ENCODE measurements at regions of chr12 and their contacts with region 1.

Region 1: GRCh38 chr12:1795785-1796514 is 24.4 kb upstream of the LRTM2 start:
- DNase-seq: peak; percentile 100
- H3K4me3 ChIP-seq: peak overlapping the region; percentile 63 to 94 (median 70)
- H3K27ac ChIP-seq: peak overlapping the region; percentile 89 to 99 (median 94)
- H3K4me1 ChIP-seq: peaks cover 10 to 61% (median 27%) of the 10 kb centered on the region in 6 donors
- H3K27me3 ChIP-seq: no peaks in the 10 kb centered on the region
- CTCF ChIP-seq: peak; percentile 86 to 100 (median 100)
- POLR2A ChIP-seq: peak; percentile 29 to 57 (median 47)

Region 2: DNA sequence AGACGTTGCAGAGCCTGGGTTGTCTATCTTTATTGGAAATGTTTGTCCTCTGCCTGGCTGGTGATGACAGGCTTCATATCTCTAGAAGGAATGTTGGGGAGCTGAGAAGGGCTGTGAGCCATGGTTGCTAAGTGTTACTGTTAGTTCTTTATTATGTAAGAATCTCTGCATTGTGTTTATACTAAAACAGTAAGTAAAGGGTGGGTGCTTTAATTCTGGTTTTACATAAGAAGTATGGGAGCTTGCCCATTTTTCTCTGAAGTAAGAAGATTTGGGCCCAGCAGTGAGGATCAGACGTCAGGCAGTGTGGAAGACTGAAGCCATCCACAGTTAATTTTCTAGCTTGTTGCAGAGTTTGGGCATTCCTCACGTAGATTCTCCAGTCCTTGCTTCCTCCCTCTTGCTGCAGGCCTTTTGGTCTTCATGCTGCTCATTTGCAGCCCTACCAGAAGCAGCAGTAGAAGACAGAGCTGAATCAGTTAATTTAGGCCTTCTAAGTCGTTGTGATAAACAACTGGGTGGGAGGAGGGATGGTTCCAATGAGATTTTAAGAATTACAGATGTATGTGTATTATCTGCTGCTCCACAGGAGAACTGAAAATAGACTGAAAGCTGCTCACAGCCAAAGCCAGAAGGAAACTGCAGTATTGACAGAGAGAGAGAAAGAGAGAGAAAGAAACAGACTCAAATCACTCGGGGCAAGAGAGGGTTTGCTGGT is 145.5 kb before region 1 on chr12:
- intact Hi-C with region 1: loop called (anchors 2 kb)
- DNase-seq: no peak
- H3K4me3 ChIP-seq: no peak overlapping the region
- H3K27ac ChIP-seq: no peak overlapping the region
- H3K4me1 ChIP-seq: peaks cover 0 to 31% (median 8%) of the 10 kb centered on the region in 6 donors
- H3K27me3 ChIP-seq: peaks cover 0 to 4% (median 0%) of the 10 kb centered on the region in 7 donors
- CTCF ChIP-seq: no peak
- POLR2A ChIP-seq: no peak

Region 3: GRCh38 chr12:1939801-1940607 is 144.1 kb after region 1 on chr12:
- intact Hi-C with region 1: loop called (anchors 5 kb)
- DNase-seq: peak; percentile 97
- H3K4me3 ChIP-seq: no peak overlapping the region
- H3K27ac ChIP-seq: no peak overlapping the region
- H3K4me1 ChIP-seq: peaks cover 4 to 10% (median 7%) of the 10 kb centered on the region in 6 donors
- H3K27me3 ChIP-seq: no peaks in the 10 kb centered on the region
- CTCF ChIP-seq: peak; percentile 92 to 99 (median 98)
- POLR2A ChIP-seq: no peak

Region 4: DNA sequence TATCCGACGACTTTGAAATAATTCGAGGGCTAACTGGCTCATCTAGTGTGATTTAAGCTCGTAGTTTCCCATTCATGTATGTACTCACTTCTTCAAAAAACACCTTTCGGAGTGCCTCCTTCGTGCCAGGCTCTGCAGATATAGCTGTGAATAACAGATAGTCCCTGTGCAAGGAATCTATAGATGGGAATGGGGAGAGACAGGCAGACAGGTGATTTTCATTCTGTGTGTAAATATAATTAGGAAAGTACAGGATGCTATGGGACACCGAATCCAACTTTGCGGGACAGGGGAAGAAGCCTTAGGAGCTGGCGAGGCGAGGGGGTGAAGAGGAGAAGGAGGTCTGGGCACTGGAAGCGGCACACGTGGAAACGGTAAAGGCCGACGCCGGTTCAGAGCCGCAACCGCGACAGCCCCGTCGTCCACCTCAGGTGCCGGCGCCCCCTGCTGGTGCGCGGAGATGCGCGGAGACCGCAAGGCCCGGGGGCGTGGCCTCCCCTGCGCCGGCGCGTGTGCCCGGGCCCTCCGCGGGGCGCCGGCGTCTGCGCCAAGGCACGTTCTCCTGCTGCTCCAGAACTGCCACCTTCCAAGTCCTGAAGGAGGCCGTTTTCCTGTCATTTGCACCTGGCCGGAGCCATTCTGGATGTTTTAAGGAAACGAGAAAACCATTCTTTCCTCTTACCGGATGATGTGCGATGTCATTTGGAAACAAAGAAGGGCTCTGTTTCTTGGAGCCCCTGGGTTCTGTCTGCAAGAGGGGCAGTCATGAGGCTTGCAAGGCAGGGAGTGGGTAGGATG is 238.9 kb after region 1 on chr12:
- intact Hi-C with region 1: loop called (anchors 10 kb)
- DNase-seq: peak; percentile 95
- H3K4me3 ChIP-seq: peak overlapping the region in 6 of 8 donors; percentile 18 to 62 (median 36)
- H3K27ac ChIP-seq: no peak overlapping the region
- H3K4me1 ChIP-seq: peaks cover 8 to 15% (median 11%) of the 10 kb centered on the region in 6 donors
- H3K27me3 ChIP-seq: peaks cover 0 to 57% (median 0%) of the 10 kb centered on the region in 7 donors
- CTCF ChIP-seq: peak; percentile 36 to 99 (median 96)
- POLR2A ChIP-seq: no peak

Measured in spleen (tissue), 13 donors.